Ovary (tissue), 10 donors: ENCODE measurements at regions of chr7 and their contacts with region 1.

Region 1: DNA sequence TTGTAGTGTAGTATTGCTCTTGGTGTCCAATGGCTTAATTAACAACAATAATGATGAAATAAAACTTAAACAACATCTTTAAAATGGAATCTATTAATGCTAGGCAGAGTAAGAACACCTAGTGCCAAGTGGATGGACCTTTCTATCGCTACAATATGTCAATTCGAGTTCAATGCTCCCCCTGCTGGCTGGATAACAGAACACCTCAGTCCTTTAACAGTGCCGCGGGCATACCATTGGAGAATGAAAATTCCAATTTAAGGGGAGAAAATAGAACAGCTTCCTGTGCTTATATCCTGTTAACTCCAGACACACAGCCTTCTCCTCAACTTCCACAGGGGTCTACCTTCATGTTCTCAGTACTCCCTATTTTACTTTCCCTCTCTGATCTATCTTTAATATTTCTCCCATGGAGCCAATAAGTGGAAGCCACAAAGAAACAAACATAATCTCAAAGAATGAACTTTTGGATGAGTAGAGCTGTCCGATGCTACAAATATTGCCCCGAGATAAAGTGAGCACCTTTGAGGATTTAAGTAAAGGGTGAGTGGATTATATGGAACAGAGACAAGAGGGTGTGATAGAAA is 41.4 kb downstream of the COL1A2 start:
- DNase-seq: peak; percentile 52 to 84 (median 67)
- H3K4me3 ChIP-seq: no peak overlapping the region
- H3K27ac ChIP-seq: no peak overlapping the region
- H3K4me1 ChIP-seq: peaks cover 1% of the 10 kb centered on the region
- H3K27me3 ChIP-seq: no peaks in the 10 kb centered on the region
- CTCF ChIP-seq: peak; percentile 72 to 79 (median 75)
- EP300 ChIP-seq: no peak
- POLR2A ChIP-seq: no peak

Region 2: GRCh38 chr7:94289071-94289470 is 147.0 kb before region 1 on chr7:
- intact Hi-C with region 1: loop called in 3 of 4 experiments (anchors 5 to 10 kb)
- DNase-seq: peak; percentile 66 to 84 (median 68)
- H3K4me3 ChIP-seq: no peak overlapping the region
- H3K27ac ChIP-seq: no peak overlapping the region
- H3K4me1 ChIP-seq: no peaks in the 10 kb centered on the region
- H3K27me3 ChIP-seq: no peaks in the 10 kb centered on the region
- CTCF ChIP-seq: peak; percentile 69 to 92 (median 91)
- EP300 ChIP-seq: no peak
- POLR2A ChIP-seq: no peak